ENCODE measurements at regions of chr14 and their contacts with region 1.

Region 1: GRCh38 chr14:65412032-65412846 is at the start of gene FUT8:
- DNase-seq: peak; percentile 89 to 98 (median 96)
- ATAC-seq: peak; percentile 88
- H3K4me3 ChIP-seq: peak within 1 kb of the TSS; percentile 74
- H3K4me3 Mint-ChIP-seq: peak within 1 kb of the TSS; percentile 99
- H3K27ac ChIP-seq: peak within 1 kb of the TSS; percentile 51 to 75
- H3K27ac Mint-ChIP-seq: peak within 1 kb of the TSS; percentile 92
- H3K4me1 ChIP-seq: peaks cover 11% of the 10 kb centered on the region
- H3K4me1 Mint-ChIP-seq: peaks cover 51% of the 10 kb centered on the region
- H3K27me3 ChIP-seq: no peaks in the 10 kb centered on the region
- H3K27me3 Mint-ChIP-seq: no peaks in the 10 kb centered on the region
- CTCF ChIP-seq: peak; percentile 63
- total RNA-seq, gene FUT8: 31.3 to 39.1 TPM

Region 2: DNA sequence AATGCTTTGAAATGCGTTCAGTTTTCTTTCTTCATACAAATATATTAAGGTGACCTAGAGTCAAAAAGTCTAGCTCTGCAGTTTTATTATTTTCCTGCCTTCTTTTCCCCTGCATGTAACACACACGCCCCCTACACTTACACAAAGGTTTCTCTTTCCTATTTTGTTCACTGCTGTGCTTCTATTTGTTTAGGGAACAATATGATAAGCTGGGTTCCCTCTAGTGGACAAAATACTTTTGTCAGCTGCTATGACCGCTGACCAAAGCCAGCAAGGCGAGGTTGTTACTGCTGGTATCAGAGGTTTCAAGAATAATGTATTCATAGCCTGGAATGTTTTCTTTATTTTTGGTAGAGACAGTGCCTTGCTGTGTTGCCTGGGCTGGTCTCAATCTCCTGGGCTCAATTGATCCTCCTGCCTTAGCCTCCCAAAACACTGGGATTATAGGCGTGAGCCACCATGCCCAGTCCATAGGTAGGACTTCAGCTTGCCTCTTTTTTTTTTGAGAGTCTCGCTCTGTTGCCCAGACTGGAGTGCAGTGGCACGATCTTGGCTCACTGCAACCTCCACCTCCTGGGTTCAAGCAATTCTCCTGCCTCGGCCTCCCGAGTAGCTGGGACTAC is 392.2 kb before region 1 on chr14:
- CTCF ChIA-PET with region 1: no interaction called
- POLR2A ChIA-PET with region 1: no interaction called
- intact Hi-C with region 1: no loop called
- DNase-seq: peak in 4 of 14 experiments; percentile 8 to 42 (median 33)
- ATAC-seq: no peak
- H3K4me3 ChIP-seq: no peak overlapping the region
- H3K4me3 Mint-ChIP-seq: no peak overlapping the region
- H3K27ac ChIP-seq: no peak overlapping the region
- H3K27ac Mint-ChIP-seq: no peak overlapping the region
- H3K4me1 ChIP-seq: no peaks in the 10 kb centered on the region
- H3K4me1 Mint-ChIP-seq: no peaks in the 10 kb centered on the region
- H3K27me3 ChIP-seq: no peaks in the 10 kb centered on the region
- H3K27me3 Mint-ChIP-seq: no peaks in the 10 kb centered on the region
- CTCF ChIP-seq: no peak

Region 3: GRCh38 chr14:65164068-65164824 is 248.0 kb before region 1 on chr14:
- CTCF ChIA-PET with region 1: interaction called, 11 read pairs
- POLR2A ChIA-PET with region 1: interaction called, 8 read pairs
- intact Hi-C with region 1: loop called (anchors 1 to 2 kb)
- DNase-seq: peak in 13 of 14 experiments; percentile 4 to 79 (median 21)
- ATAC-seq: peak; percentile 54
- H3K4me3 ChIP-seq: no peak overlapping the region
- H3K4me3 Mint-ChIP-seq: no peak overlapping the region
- H3K27ac ChIP-seq: no peak overlapping the region
- H3K27ac Mint-ChIP-seq: no peak overlapping the region
- H3K4me1 ChIP-seq: no peaks in the 10 kb centered on the region
- H3K4me1 Mint-ChIP-seq: peaks cover 5% of the 10 kb centered on the region
- H3K27me3 ChIP-seq: no peaks in the 10 kb centered on the region
- H3K27me3 Mint-ChIP-seq: no peaks in the 10 kb centered on the region
- CTCF ChIP-seq: peak; percentile 93

Region 4: DNA sequence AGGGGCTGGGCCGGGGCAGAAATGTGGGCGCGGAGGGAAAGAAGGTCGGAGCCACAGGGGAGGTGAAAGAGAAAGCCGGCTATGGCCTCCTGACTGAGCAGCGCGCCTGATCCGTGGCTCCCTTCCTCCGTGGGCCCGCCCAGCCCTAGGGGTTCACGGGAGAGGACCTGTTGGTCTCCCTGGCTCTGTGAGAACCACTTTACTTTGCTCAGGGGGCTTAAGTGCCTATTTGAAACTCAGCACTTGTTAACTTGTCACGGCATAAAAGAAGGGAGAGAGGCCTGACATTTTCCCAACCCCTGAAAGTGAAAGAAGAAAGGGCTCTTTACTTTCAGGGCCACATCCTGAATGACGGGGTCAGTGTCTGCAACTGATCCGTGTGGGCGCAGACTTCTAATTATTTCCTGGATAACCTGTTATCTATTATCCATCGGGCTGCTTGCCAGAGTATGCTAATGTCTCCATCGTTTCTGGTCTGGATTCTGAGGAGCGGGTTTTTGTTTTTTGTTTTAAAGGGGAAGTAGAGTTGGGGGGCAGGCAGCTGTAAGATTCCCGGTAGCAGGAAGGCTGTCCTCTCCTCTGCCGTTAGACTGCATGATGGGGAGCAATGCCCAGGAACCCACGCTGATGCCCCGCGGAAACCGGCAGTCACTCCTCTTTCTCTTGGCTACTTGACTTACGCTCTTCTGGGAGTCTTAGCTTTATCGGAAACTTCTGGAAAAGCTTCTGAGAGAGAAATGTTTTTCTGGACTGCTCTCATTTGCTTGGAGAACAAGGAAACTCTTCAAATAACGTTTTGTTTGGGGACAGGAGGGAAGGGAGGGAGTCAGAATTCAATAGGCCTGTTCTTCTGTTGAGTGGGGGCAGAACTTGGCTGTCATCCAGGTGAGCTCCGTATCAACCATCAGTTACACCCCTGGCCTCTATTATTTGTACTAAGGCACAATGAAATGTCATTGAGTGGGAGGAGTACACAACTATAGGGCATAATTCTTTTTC is 182.2 kb before region 1 on chr14:
- CTCF ChIA-PET with region 1: no interaction called
- POLR2A ChIA-PET with region 1: interaction called, 17 read pairs
- intact Hi-C with region 1: no loop called
- DNase-seq: peak in 12 of 14 experiments; percentile 18 to 57 (median 34)
- ATAC-seq: peak; percentile 86
- H3K4me3 ChIP-seq: peak overlapping the region; percentile 59
- H3K4me3 Mint-ChIP-seq: peak overlapping the region; percentile 90
- H3K27ac ChIP-seq: peak overlapping the region in 1 of 2 donors; percentile 72
- H3K27ac Mint-ChIP-seq: peak overlapping the region; percentile 86
- H3K4me1 ChIP-seq: peaks cover 27% of the 10 kb centered on the region
- H3K4me1 Mint-ChIP-seq: peaks cover 50% of the 10 kb centered on the region
- H3K27me3 ChIP-seq: no peaks in the 10 kb centered on the region
- H3K27me3 Mint-ChIP-seq: no peaks in the 10 kb centered on the region
- CTCF ChIP-seq: no peak

Region 5: DNA sequence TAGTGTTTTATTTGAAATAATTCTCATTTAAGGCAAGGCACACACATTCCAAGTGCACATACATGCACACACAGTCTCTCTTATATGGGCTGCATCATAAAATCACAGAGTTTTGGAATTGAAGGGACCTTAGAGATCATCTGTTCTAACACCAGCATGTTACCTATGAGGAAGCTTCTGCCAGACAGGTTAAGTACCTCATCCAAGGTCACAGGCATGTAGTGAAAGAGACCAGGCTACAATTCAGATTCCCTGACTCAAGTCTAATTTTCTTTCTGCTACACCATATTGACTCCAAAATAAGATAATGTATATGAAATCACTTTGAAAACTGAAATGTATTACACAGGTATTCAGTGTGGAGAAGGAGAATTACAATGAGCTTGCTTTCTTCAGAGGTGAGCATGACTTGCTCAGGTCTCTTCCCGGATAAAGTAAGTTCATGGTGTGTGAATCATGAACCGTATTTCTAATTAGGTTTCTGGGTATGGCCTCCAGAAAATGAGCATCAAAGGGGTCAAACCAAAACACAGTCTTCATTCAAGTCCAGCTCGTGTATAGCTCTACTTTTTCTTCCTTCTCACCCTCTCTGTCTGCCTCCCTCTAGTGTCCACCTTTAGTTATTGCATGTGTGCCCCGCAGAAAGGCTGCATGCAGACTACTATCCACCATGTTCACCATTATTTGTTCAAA is 412.2 kb after region 1 on chr14:
- CTCF ChIA-PET with region 1: interaction called, 38 read pairs
- POLR2A ChIA-PET with region 1: interaction called, 8 read pairs
- intact Hi-C with region 1: loop called (anchors 2 to 5 kb)
- DNase-seq: peak; percentile 29 to 82 (median 42)
- ATAC-seq: peak; percentile 97
- H3K4me3 ChIP-seq: no peak overlapping the region
- H3K4me3 Mint-ChIP-seq: no peak overlapping the region
- H3K27ac ChIP-seq: no peak overlapping the region
- H3K27ac Mint-ChIP-seq: no peak overlapping the region
- H3K4me1 ChIP-seq: peaks cover 3% of the 10 kb centered on the region
- H3K4me1 Mint-ChIP-seq: peaks cover 13% of the 10 kb centered on the region
- H3K27me3 ChIP-seq: no peaks in the 10 kb centered on the region
- H3K27me3 Mint-ChIP-seq: no peaks in the 10 kb centered on the region
- CTCF ChIP-seq: peak; percentile 93

Region 6: GRCh38 chr14:66070509-66071319 is 658.5 kb after region 1 on chr14:
- CTCF ChIA-PET with region 1: interaction called, 3 read pairs
- POLR2A ChIA-PET with region 1: no interaction called
- intact Hi-C with region 1: loop called (anchors 1 kb)
- DNase-seq: peak; percentile 49 to 80 (median 69)
- ATAC-seq: peak; percentile 93
- H3K4me3 ChIP-seq: no peak overlapping the region
- H3K4me3 Mint-ChIP-seq: no peak overlapping the region
- H3K27ac ChIP-seq: no peak overlapping the region
- H3K27ac Mint-ChIP-seq: no peak overlapping the region
- H3K4me1 ChIP-seq: peaks cover 4% of the 10 kb centered on the region
- H3K4me1 Mint-ChIP-seq: peaks cover 4% of the 10 kb centered on the region
- H3K27me3 ChIP-seq: no peaks in the 10 kb centered on the region
- H3K27me3 Mint-ChIP-seq: peaks cover 5% of the 10 kb centered on the region
- CTCF ChIP-seq: peak; percentile 97

Measured in CD4-positive, alpha-beta T cell (primary cell).